HepG2 (cell line): ENCODE measurements at regions of chr15 and their contacts with region 1.

Region 1: DNA sequence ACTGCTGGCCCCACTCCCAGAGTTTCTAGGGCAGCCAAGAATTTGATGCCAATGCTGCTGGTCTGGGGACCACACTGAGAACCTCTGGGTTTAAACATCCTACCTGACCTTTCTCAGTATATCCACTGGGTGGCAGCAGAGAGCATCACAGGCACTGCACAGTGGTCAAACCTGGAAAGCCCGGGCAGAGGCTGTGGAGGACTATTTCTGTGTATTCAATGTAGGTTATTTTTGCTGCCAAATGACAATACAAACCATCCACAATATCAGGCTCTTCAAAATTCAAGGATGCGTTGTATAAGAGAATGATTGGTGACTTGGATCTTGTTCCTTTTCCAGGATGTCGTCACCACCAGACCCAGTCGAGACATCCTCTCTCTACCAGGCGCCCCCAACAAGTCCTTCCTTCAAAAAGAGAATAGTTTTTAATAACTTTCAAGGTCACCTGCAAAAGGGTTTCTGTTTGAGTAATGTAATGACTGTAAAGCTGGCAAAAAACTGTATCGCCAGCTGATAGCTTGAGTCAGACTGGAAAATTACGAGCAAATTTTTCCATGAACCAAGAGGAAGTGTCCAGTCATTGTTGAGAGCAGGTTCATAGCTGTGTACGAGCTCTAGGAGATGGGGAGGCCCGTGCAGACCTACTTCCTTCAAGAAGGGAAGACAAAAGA is 30.5 kb upstream of the MYZAP start:
- DNase-seq: peak; percentile 62
- ATAC-seq: peak; percentile 89
- H3K4me3 ChIP-seq: no peak overlapping the region
- H3K27ac ChIP-seq: no peak overlapping the region
- H3K4me1 ChIP-seq: peaks cover 11% of the 10 kb centered on the region
- H3K27me3 ChIP-seq: 0 out of 5 replicates have a peak, but pooled peaks cover 0 to 4% of the 10 kb centered on the region in 2 experiments
- CTCF ChIP-seq: peak; percentile 84
- EP300 ChIP-seq: no peak
- POLR2A ChIP-seq: no peak
- RAD21 ChIP-seq: peak; percentile 65

Region 2: DNA sequence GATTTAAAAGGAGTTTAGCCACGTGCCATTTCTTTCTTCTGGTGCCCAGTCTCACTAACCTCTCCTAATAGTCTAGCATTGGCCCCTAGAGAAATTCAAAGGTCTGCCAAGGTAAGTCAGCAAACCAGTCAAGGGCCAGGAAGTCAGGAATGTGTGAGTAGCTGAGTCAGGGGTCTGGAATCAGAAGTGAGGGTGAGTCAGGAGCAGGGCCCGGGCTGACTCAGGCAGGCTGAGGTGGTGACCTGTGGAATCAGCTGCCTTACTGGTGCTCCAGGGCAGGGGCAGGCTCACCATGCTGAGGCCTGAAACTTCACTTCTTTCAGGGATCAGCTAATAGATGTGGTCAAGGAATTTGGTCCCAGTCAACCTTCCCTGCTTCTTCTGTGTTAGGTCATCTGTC is 75.3 kb before region 1 on chr15:
- CTCF ChIA-PET with region 1: no interaction called
- POLR2A ChIA-PET with region 1: no interaction called
- in situ Hi-C with region 1: no loop called
- intact Hi-C with region 1: no loop called
- DNase-seq: peak; percentile 81
- ATAC-seq: peak; percentile 98
- H3K4me3 ChIP-seq: no peak overlapping the region
- H3K27ac ChIP-seq: peak overlapping the region; percentile 6
- H3K4me1 ChIP-seq: peaks cover 22% of the 10 kb centered on the region
- H3K27me3 ChIP-seq: no peaks in the 10 kb centered on the region
- CTCF ChIP-seq: no peak
- EP300 ChIP-seq: peak in 1 of 2 experiments; percentile 38; a peak in 1 of 4 replicates
- POLR2A ChIP-seq: no peak
- RAD21 ChIP-seq: no peak

Region 3: DNA sequence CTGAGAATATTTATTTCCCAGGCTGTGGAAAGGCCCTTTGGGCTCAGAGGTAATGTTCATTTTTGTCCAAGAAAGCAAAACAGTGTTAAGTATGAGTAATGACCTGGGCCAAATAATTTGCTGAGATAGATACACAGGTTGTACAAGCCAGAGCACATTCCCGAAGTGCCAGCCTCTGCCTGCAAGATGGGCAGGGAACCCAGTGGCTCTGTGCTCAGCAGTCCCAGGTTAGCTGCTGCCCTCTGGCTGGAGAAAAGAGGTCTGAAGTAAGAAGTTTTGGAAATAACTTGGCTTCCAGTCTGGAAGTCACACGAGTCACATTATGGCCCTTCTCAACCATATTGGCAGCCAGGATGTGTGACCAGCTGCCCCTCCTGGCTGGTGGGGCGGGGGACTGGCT is 50.8 kb after region 1 on chr15:
- CTCF ChIA-PET with region 1: interaction called, 3 read pairs
- POLR2A ChIA-PET with region 1: no interaction called
- in situ Hi-C with region 1: loop called (anchors 5 kb)
- intact Hi-C with region 1: loop called (anchors 2 kb)
- DNase-seq: peak; percentile 12
- ATAC-seq: peak; percentile 63
- H3K4me3 ChIP-seq: no peak overlapping the region
- H3K27ac ChIP-seq: no peak overlapping the region
- H3K4me1 ChIP-seq: peaks cover 33% of the 10 kb centered on the region
- H3K27me3 ChIP-seq: peaks cover 1 to 16% of the 10 kb centered on the region in 2 experiments; a peak in 3 of 5 replicates
- CTCF ChIP-seq: peak; percentile 42; the same call in 1 of the 2 replicates
- EP300 ChIP-seq: no peak
- POLR2A ChIP-seq: no peak
- RAD21 ChIP-seq: no peak

Region 4: GRCh38 chr15:57640935-57641682 is 79.9 kb after region 1 on chr15:
- CTCF ChIA-PET with region 1: interaction called, 4 read pairs
- POLR2A ChIA-PET with region 1: no interaction called
- in situ Hi-C with region 1: no loop called
- intact Hi-C with region 1: loop called (anchors 2 kb)
- DNase-seq: peak; percentile 26
- ATAC-seq: peak; percentile 83
- H3K4me3 ChIP-seq: no peak overlapping the region
- H3K27ac ChIP-seq: no peak overlapping the region
- H3K4me1 ChIP-seq: no peaks in the 10 kb centered on the region
- H3K27me3 ChIP-seq: peaks cover 0 to 8% of the 10 kb centered on the region in 2 experiments; a peak in 3 of 5 replicates
- CTCF ChIP-seq: peak; percentile 42
- EP300 ChIP-seq: no peak
- POLR2A ChIP-seq: no peak
- RAD21 ChIP-seq: no peak

Region 5: DNA sequence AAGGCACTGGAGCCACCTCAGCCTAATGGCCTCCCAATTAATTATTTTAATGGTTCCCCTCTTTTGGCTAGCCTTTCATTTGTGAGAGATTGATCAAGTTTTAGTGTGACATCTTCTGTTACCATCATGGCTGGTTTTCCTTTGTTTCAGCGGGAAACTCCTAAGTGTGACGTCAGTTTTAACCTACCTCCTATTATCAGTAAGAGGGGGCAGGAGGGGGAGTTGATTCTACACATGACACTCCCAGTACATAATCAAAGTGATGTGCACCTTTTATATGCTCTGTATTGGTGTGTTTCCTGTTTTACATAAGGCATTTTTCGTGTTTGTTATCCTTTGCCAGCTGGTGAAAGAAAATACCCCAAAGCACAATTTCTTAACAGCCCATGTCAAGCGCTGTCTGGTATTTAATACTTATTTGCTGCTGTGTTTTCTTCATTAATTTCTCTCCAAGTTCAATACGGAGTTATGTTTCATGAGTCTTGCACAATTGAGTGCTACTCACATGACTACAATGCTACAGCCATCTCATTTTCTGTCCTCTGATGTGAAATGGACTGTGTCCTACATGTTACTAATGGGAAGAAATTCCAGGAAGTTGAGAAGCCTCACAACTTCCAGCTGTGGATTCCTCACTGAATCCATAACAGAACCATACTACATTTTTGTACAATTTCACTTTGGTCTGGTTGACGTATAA is 93.1 kb after region 1 on chr15:
- CTCF ChIA-PET with region 1: interaction called, 4 read pairs
- POLR2A ChIA-PET with region 1: no interaction called
- in situ Hi-C with region 1: no loop called
- intact Hi-C with region 1: loop called (anchors 2 kb)
- DNase-seq: no peak
- ATAC-seq: no peak
- H3K4me3 ChIP-seq: no peak overlapping the region
- H3K27ac ChIP-seq: no peak overlapping the region
- H3K4me1 ChIP-seq: peaks cover 10% of the 10 kb centered on the region
- H3K27me3 ChIP-seq: peaks cover 0 to 3% of the 10 kb centered on the region in 2 experiments; a peak in 1 of 5 replicates
- CTCF ChIP-seq: no peak
- EP300 ChIP-seq: no peak
- POLR2A ChIP-seq: no peak
- RAD21 ChIP-seq: no peak